ENCODE measurements at regions of chr6 and their contacts with region 1.

Region 1: GRCh38 chr6:116531675-116532570 is 13.6 kb downstream of the TRAPPC3L start:
- DNase-seq: peak; percentile 31 to 83 (median 52)
- ATAC-seq: peak; percentile 99
- H3K4me3 ChIP-seq: no peak overlapping the region
- H3K4me3 Mint-ChIP-seq: no peak overlapping the region
- H3K27ac ChIP-seq: no peak overlapping the region
- H3K27ac Mint-ChIP-seq: no peak overlapping the region
- H3K4me1 ChIP-seq: no peaks in the 10 kb centered on the region
- H3K4me1 Mint-ChIP-seq: no peaks in the 10 kb centered on the region
- H3K27me3 ChIP-seq: peaks cover 0 to 5% of the 10 kb centered on the region in 2 experiments
- H3K27me3 Mint-ChIP-seq: peaks cover 38% of the 10 kb centered on the region
- CTCF ChIP-seq: peak; percentile 83

Region 2: DNA sequence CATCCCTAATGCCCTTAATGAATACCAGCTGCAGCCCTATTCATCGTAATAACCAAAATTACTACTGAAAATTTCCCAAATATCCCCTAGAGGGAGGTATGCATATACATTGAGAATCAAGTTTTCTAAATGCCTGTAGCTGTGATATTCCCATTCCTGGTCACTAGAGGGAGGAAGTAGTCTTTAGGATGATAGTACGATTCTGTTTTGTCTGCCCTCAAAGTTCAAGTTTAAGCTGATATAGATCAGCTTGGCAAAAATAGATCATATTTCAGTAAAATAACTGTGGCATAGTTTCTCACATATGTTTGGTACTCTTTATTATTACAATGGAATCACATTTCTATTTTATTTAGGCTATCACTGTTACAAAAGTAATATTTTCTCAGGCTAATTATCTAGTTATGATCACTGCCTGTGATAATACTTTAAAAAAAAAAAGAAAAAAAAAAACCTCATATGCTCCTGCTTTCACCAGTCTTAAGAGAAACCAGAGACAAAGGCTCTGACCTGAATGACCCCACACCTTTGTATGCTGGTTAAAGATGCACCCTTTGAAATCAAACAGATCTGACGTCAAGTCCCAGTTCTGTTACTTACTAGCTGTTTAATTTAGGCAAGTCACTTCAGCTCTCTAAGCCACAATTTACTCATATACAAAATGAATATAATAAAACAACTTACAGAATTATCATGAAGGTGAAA is 263.2 kb before region 1 on chr6:
- CTCF ChIA-PET with region 1: interaction called, 17 read pairs
- POLR2A ChIA-PET with region 1: no interaction called
- intact Hi-C with region 1: loop called (anchors 1 to 5 kb)
- DNase-seq: peak in 3 of 14 experiments; percentile 67 to 81 (median 76)
- ATAC-seq: peak; percentile 95
- H3K4me3 ChIP-seq: no peak overlapping the region
- H3K4me3 Mint-ChIP-seq: no peak overlapping the region
- H3K27ac ChIP-seq: peak overlapping the region in 1 of 2 donors; percentile 10
- H3K27ac Mint-ChIP-seq: peak overlapping the region; percentile 4
- H3K4me1 ChIP-seq: peaks cover 9% of the 10 kb centered on the region
- H3K4me1 Mint-ChIP-seq: peaks cover 38% of the 10 kb centered on the region
- H3K27me3 ChIP-seq: no peaks in the 10 kb centered on the region
- H3K27me3 Mint-ChIP-seq: no peaks in the 10 kb centered on the region
- CTCF ChIP-seq: peak; percentile 94

Region 3: GRCh38 chr6:116439522-116440051 is 92.3 kb before region 1 on chr6:
- CTCF ChIA-PET with region 1: no interaction called
- POLR2A ChIA-PET with region 1: no interaction called
- intact Hi-C with region 1: loop called in 1 of 2 experiments (anchors 2 kb)
- DNase-seq: no peak
- ATAC-seq: no peak
- H3K4me3 ChIP-seq: no peak overlapping the region
- H3K4me3 Mint-ChIP-seq: no peak overlapping the region
- H3K27ac ChIP-seq: no peak overlapping the region
- H3K27ac Mint-ChIP-seq: no peak overlapping the region
- H3K4me1 ChIP-seq: peaks cover 2% of the 10 kb centered on the region
- H3K4me1 Mint-ChIP-seq: peaks cover 6% of the 10 kb centered on the region
- H3K27me3 ChIP-seq: no peaks in the 10 kb centered on the region
- H3K27me3 Mint-ChIP-seq: peaks cover 9% of the 10 kb centered on the region
- CTCF ChIP-seq: no peak

Region 4: DNA sequence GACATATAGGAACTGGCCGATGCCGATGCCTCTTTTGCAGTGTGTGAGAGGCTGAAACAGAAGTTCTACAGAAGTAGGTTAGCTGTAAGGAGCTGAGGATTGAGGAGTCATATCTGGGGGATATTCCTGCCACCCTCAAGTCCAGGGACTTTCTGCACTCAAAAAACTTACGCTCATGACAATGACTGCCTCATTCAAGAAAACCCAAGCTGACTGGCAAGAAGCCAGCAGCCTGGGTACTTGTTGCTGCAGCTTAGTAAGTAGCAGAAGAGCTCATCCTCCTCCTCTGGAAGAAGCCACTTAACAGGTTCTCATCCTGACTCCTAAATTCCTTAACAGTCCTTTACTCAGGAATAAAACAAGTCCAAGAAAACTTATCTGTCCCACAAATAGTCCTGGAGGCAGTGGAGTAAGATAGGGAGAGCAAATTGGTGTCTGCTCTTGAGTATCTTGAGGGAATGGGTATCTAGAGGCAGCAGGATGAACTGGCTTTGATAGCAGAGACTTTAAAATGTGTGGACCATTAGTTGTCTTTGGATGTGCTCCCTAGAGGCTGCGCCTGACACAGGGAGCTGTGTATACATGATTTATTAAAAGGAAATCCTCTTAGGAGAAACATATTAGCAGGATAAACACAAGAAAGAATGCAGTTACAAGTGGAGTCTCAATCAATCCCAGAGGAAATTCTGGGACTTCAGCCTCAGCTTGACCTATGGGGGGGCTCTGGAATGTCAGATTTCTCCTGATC is 13.1 kb before region 1 on chr6:
- CTCF ChIA-PET with region 1: no interaction called
- POLR2A ChIA-PET with region 1: no interaction called
- intact Hi-C with region 1: no loop called
- DNase-seq: no peak
- ATAC-seq: no peak
- H3K4me3 ChIP-seq: no peak overlapping the region
- H3K4me3 Mint-ChIP-seq: no peak overlapping the region
- H3K27ac ChIP-seq: no peak overlapping the region
- H3K27ac Mint-ChIP-seq: no peak overlapping the region
- H3K4me1 ChIP-seq: no peaks in the 10 kb centered on the region
- H3K4me1 Mint-ChIP-seq: no peaks in the 10 kb centered on the region
- H3K27me3 ChIP-seq: peaks cover 0 to 6% of the 10 kb centered on the region in 2 experiments
- H3K27me3 Mint-ChIP-seq: peaks cover 5% of the 10 kb centered on the region
- CTCF ChIP-seq: no peak

Region 5: DNA sequence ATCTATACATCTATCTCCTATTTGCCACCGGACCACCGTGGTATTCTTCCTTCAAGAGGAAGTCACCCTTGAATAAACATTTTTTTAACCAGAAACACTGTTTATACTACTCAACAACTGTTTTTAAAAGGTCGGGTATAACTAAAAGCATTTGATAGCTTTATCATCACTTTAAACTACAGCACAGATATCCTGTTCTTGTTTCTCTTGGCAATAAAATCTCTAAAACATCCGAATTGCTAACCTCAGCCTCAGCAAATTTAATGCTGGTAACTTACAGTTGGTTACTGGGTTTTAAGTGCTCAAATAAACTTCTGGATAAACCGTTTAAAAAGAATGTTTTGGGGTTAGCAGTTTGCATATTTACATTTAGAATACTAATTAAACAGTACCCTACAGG is 116.2 kb after region 1 on chr6:
- CTCF ChIA-PET with region 1: no interaction called
- POLR2A ChIA-PET with region 1: no interaction called
- intact Hi-C with region 1: loop called (anchors 1 to 5 kb)
- DNase-seq: no peak
- ATAC-seq: no peak
- H3K4me3 ChIP-seq: no peak overlapping the region
- H3K4me3 Mint-ChIP-seq: no peak overlapping the region
- H3K27ac ChIP-seq: no peak overlapping the region
- H3K27ac Mint-ChIP-seq: no peak overlapping the region
- H3K4me1 ChIP-seq: no peaks in the 10 kb centered on the region
- H3K4me1 Mint-ChIP-seq: peaks cover 10% of the 10 kb centered on the region
- H3K27me3 ChIP-seq: no peaks in the 10 kb centered on the region
- H3K27me3 Mint-ChIP-seq: no peaks in the 10 kb centered on the region
- CTCF ChIP-seq: no peak